Colonic mucosa (tissue), 4 donors: ENCODE measurements at regions of chr20 and their contacts with region 1.

Region 1: DNA sequence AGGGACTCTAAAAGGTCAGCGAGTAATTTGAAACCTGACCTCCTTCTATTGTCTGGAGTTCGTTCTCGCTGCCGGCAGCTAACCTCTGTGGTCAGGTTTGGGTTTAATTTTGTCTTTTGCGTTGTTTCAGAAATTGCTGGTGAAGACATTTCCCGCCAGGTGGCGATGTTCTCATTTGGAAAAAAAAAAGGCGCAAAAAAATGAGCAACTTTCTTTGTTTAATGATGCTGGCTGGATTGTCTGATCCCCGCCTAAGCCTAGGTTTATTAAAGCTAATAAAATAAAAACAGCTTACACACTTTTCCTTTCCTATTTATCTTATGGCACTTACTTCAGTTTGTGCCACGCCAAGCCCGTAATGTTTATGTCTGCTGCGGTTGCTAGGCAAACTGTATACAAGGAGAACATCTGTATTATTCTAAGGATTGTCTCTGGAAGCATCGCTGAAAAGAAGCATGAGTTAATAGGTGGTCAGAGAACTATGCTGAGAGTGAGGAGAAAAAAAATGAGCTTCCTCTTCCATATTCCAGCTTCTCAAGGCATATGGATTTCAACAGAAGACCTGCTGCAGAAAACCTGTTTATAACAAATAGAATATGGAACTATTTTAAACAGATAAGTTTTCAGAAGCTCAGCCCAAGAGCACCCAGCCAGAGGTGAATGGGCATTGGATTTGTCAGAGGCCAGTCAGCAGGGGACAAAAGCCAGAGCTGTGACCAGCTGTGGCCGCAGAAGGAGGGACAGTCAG is 205.7 kb downstream of the DOK5 start:
- DNase-seq: no peak
- H3K4me3 ChIP-seq: no peak overlapping the region
- H3K27ac ChIP-seq: no peak overlapping the region
- H3K4me1 ChIP-seq: no peaks in the 10 kb centered on the region
- H3K27me3 ChIP-seq: no peaks in the 10 kb centered on the region
- CTCF ChIP-seq: peak; percentile 51

Region 2: DNA sequence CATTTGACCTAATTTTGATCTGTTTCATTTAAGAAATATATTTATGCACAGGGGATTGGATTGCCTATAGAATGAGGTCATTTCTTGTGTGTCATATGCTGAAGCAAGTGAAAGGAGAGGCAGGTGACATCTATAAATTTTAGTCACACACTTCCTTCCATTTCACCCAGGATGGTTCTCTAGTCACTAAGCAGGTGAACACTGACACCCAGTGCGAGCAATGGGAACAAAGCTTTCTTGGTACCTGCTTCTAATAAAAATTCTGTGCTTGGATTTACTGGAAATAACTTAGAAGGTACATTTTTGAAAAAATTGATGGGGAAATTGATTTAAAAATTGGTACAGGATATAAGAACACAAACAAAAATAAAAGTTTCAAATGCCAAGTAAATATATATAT is 1500.5 kb after region 1 on chr20:
- intact Hi-C with region 1: loop called (anchors 5 kb)
- DNase-seq: no peak
- H3K4me3 ChIP-seq: no peak overlapping the region
- H3K27ac ChIP-seq: no peak overlapping the region
- H3K4me1 ChIP-seq: no peaks in the 10 kb centered on the region
- H3K27me3 ChIP-seq: no peaks in the 10 kb centered on the region
- CTCF ChIP-seq: no peak

Region 3: DNA sequence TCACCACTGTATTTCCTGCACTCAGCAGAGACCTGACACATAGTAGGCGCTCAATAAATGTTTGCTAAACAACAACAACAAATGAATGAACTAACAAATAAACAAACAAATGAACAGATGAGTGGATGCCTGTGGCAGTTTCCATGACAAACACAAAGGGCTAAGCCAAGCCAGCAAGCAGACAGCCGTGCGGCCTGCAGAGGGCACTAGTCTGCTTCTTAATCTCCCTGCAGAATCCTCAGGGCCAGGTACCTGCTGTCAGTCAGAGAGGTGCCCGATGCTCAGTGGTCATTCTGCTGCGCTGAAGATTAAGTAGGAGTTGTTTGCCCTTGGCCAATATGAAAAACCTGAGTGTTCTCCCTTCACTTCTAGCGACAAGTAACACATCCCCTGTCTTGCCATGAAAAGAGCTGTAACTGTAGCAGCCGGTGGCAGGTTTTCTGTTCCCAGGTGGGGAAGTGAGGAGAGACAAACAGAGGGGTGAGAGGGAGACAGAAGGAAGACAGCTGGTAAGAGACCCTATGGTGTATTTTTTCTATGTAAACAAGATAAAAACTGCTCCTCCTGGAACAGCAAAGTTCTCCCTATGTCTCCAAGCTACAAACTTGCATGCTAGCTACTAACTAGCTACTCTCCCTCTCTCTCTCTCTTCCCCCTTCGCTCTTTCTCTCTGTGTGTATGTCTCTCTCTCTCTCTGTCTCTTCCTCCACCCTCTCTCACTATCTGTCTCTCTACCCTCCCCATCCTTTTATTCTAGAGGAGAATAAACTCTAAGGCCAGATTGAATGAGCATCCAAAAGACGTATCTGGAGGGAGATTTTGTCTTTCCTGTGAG is 1567.1 kb after region 1 on chr20 and contains the start of gene MC3R:
- intact Hi-C with region 1: loop called (anchors 10 kb)
- DNase-seq: peak; percentile 32
- H3K4me3 ChIP-seq: no peak within 1 kb of the TSS
- H3K27ac ChIP-seq: no peak within 1 kb of the TSS
- H3K4me1 ChIP-seq: no peaks in the 10 kb centered on the region
- H3K27me3 ChIP-seq: no peaks in the 10 kb centered on the region
- CTCF ChIP-seq: peak; percentile 58
- total RNA-seq, gene MC3R: not detected